ENCODE measurements at regions of chr2 and their contacts with region 1.

Region 1: DNA sequence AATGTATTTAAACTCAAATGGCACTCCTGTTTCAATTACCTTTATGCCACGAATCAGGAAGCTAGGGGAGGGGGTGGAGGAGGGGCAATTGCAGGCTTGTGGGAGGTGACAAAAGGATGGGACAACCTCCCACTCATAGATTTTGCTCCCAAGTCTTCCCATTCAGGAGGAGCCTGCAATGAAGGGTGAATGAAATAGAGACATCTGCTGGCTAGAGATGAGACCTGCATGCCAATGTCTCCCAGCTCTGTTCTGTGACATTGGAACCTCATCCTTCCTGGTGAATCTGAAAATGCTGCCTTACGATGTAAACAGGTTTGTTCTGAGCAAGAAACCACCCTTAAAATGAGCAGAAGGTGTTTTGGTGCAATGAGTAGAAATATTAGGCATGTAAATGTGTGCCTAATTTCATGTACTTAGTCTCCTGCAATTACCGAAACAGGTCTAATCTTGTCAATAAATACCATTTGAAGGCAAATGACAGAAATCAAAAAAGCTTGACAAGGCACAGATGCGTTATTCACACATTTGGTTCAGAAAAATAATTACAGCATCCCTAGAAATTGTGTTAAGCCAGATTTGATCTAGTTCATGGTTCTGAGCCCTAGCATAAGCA is 2.7 kb upstream of the PID1 start:
- DNase-seq: peak; percentile 40 to 61
- H3K4me3 ChIP-seq: peak overlapping the region; percentile 40; the same call in 1 of the 2 replicates
- H3K27ac ChIP-seq: no peak overlapping the region
- H3K4me1 ChIP-seq: peaks cover 5% of the 10 kb centered on the region; the same call in 1 of the 2 replicates
- H3K27me3 ChIP-seq: peaks cover 18% of the 10 kb centered on the region
- CTCF ChIP-seq: peak; percentile 74

Region 2: DNA sequence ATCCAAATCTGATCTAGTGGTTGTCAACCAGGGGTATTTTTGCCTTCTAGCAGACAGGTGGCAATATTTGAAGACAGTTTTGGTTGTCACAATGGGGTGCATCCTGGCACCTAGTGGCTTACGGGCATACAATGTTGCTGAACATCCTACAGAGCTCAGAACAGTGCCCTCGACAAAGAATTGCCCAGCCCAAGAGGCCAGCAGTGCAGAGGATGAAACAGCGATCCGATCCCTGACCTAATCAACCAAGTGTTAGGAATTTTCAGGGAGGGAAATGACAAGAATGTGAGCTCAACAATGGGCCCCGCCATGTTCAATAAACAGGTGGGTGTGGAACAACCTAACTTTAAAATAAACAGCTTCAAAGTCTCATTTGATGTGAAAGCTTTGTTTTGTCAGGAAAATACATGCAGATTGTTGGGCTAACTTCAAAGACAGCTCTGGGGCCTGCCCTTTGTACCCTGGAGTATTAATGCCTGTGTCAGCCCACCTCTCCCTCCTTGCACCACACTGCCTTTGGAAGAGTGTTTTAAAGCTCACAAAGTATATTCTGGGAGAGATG is 1629.8 kb before region 1 on chr2:
- CTCF ChIA-PET with region 1: interaction called, 11 read pairs
- POLR2A ChIA-PET with region 1: no interaction called
- intact Hi-C with region 1: no loop called
- DNase-seq: no peak
- H3K4me3 ChIP-seq: no peak overlapping the region
- H3K27ac ChIP-seq: no peak overlapping the region
- H3K4me1 ChIP-seq: no peaks in the 10 kb centered on the region
- H3K27me3 ChIP-seq: no peaks in the 10 kb centered on the region
- CTCF ChIP-seq: no peak

Region 3: DNA sequence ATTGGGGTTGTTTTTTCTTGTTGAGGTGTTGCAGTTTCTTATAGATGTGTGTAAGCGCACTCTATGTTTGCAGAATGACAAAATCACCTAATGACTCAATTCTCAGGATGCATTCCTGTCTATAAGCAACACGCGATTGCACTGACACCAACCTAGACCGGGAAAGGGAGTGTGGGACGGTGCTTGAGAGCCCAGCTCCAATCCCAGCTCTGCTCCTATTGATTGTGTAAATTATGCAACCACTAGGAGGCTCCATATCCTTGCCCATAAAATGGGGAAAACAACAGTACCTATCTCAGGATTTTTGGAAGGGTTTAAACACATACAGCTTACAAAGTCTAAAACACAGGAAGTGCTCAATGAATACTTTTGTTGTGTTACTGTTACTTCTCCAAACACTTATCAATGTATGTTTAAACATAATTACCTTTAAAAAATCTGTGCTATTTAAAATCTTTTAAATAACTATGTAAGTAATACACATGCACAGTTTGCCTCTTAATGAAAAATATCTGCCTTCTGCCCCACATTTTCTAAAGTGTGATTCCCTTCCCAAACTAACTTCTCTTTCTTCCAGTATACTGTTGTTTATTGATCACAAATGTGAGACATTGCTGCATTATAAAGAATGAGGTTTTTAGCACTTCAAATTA is 1224.9 kb before region 1 on chr2:
- CTCF ChIA-PET with region 1: interaction called, 3 read pairs
- POLR2A ChIA-PET with region 1: no interaction called
- intact Hi-C with region 1: loop called (anchors 5 kb)
- DNase-seq: peak; percentile 30 to 70
- H3K4me3 ChIP-seq: no peak overlapping the region
- H3K27ac ChIP-seq: no peak overlapping the region
- H3K4me1 ChIP-seq: peaks cover 12% of the 10 kb centered on the region
- H3K27me3 ChIP-seq: no peaks in the 10 kb centered on the region
- CTCF ChIP-seq: peak; percentile 67

Region 4: GRCh38 chr2:229133155-229133772 is 140.6 kb before region 1 on chr2:
- CTCF ChIA-PET with region 1: no interaction called
- POLR2A ChIA-PET with region 1: no interaction called
- intact Hi-C with region 1: loop called (anchors 1 kb)
- DNase-seq: peak in 1 of 2 experiments; percentile 7
- H3K4me3 ChIP-seq: no peak overlapping the region
- H3K27ac ChIP-seq: no peak overlapping the region
- H3K4me1 ChIP-seq: peaks cover 14% of the 10 kb centered on the region; the same call in 1 of the 2 replicates
- H3K27me3 ChIP-seq: no peaks in the 10 kb centered on the region
- CTCF ChIP-seq: peak; percentile 67

Region 5: GRCh38 chr2:229249571-229250100 is 24.2 kb before region 1 on chr2:
- CTCF ChIA-PET with region 1: interaction called, 19 read pairs
- POLR2A ChIA-PET with region 1: no interaction called
- intact Hi-C with region 1: no loop called
- DNase-seq: no peak
- H3K4me3 ChIP-seq: no peak overlapping the region
- H3K27ac ChIP-seq: no peak overlapping the region
- H3K4me1 ChIP-seq: no peaks in the 10 kb centered on the region
- H3K27me3 ChIP-seq: no peaks in the 10 kb centered on the region
- CTCF ChIP-seq: no peak

Region 6: GRCh38 chr2:229642371-229642770 is 368.5 kb after region 1 on chr2:
- CTCF ChIA-PET with region 1: no interaction called
- POLR2A ChIA-PET with region 1: no interaction called
- intact Hi-C with region 1: no loop called
- DNase-seq: peak; percentile 58 to 81
- H3K4me3 ChIP-seq: no peak overlapping the region
- H3K27ac ChIP-seq: peak overlapping the region; percentile 47
- H3K4me1 ChIP-seq: peaks cover 16% of the 10 kb centered on the region
- H3K27me3 ChIP-seq: no peaks in the 10 kb centered on the region
- CTCF ChIP-seq: no peak